ENCODE measurements at regions of chr7 and their contacts with region 1.

Region 1: DNA sequence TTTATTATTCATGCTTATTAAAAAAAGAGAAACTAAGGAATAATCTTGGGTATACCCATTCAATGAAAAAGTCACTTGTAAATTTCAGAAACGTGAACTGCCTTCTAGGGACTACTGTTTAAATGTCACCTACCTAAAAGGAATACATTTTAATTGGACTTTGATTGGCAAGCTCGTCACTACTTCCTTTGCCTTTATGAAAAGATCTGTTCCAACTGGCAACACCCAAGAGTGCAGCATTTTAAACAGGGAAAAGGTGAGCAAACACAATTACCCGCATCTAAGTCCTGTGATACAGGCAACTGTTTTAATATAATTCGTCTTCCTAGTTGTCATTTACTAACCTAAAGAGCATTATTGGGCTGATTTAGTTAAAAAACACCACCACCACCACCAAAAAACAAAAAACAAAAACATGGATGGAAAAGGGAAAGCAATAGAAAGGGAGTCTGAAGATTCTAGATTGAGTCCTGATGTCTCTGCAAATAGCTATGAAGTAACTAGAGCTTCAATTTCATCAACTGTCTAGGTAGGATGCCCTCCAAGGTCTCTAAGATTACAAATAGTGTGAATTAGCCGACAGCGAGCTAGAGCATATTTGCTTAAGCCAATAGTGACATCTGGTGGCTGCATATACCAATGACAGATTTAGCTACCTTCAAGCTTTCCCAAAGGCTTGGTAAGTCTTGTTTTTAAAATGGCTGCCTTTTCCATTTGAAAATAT is 33.8 kb upstream of the ICA1 start:
- DNase-seq: peak; percentile 40
- ATAC-seq: peak; percentile 83
- H3K4me3 Mint-ChIP-seq: no peak overlapping the region
- H3K27ac Mint-ChIP-seq: no peak overlapping the region
- H3K4me1 Mint-ChIP-seq: peaks cover 3% of the 10 kb centered on the region
- H3K27me3 Mint-ChIP-seq: peaks cover 11% of the 10 kb centered on the region
- CTCF ChIP-seq: peak; percentile 74

Region 2: DNA sequence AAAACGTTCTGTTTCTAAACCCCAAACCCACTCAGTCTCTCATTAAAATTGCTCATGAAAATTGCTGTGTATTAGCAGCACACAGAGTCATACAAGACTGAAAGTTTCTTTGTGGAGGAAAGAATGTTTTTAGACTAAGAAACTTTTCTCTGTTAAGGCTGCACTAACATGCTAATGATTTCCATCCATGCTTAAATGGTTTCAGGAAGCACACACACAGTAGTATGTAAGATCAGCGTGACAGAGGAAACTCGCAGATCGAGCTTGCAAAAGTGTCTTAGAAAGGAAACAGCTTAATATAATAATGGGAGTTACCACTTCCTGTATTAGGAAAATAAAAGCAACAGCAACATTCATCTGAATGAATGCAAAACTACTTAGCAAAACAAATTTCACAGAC is 146.6 kb before region 1 on chr7:
- CTCF ChIA-PET with region 1: no interaction called
- POLR2A ChIA-PET with region 1: no interaction called
- intact Hi-C with region 1: no loop called
- DNase-seq: no peak
- ATAC-seq: no peak
- H3K4me3 Mint-ChIP-seq: no peak overlapping the region
- H3K27ac Mint-ChIP-seq: peak overlapping the region; percentile 19
- H3K4me1 Mint-ChIP-seq: peaks cover 40% of the 10 kb centered on the region
- H3K27me3 Mint-ChIP-seq: no peaks in the 10 kb centered on the region
- CTCF ChIP-seq: no peak

Region 3: GRCh38 chr7:8205031-8205387 is 90.8 kb before region 1 on chr7:
- CTCF ChIA-PET with region 1: no interaction called
- POLR2A ChIA-PET with region 1: no interaction called
- intact Hi-C with region 1: no loop called
- DNase-seq: no peak
- ATAC-seq: no peak
- H3K4me3 Mint-ChIP-seq: no peak overlapping the region
- H3K27ac Mint-ChIP-seq: no peak overlapping the region
- H3K4me1 Mint-ChIP-seq: peaks cover 2% of the 10 kb centered on the region
- H3K27me3 Mint-ChIP-seq: peaks cover 4% of the 10 kb centered on the region
- CTCF ChIP-seq: no peak

Region 4: DNA sequence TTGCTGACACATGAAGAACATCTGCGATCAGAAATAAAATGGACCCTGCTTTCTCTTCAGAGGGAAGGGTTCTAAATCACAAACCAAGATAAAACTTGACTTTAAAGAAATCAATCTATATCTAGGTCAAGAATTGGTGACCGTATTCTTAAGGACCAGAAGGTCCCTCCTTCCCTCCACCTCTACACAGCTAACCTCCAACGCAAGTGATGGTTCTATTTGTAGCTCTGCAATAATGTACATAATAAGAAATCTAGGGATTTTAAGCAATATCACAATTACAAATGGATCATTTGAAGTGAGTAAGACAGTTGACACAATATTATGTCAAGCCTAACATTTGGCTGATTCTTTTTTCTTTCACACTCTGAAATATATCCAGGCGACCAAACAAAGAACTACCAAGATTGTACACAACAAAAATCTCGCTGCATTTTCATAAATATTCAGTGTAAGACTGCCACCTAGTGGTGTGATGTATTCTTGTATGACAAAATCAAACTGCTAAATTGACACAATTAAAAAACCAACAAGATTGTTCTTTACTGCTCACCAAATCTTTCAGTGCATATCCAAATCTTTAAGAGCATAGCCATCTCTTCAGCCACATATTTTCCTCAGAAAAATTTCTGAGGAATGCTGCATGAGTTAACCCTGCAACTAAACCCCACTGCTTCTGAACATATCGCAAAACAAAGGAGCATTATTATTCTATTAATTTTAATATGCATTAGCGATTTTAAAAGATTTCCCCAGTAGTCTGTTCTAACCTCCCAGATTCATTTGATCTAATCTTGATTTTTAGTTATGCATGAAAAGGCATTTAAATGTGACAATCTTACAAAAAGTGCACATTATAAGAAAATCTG is 78.4 kb before region 1 on chr7:
- CTCF ChIA-PET with region 1: interaction called, 9 read pairs
- POLR2A ChIA-PET with region 1: no interaction called
- intact Hi-C with region 1: loop called (anchors 5 kb)
- DNase-seq: peak; percentile 26
- ATAC-seq: peak; percentile 60
- H3K4me3 Mint-ChIP-seq: no peak overlapping the region
- H3K27ac Mint-ChIP-seq: no peak overlapping the region
- H3K4me1 Mint-ChIP-seq: peaks cover 2% of the 10 kb centered on the region
- H3K27me3 Mint-ChIP-seq: no peaks in the 10 kb centered on the region
- CTCF ChIP-seq: peak; percentile 86

Region 5: DNA sequence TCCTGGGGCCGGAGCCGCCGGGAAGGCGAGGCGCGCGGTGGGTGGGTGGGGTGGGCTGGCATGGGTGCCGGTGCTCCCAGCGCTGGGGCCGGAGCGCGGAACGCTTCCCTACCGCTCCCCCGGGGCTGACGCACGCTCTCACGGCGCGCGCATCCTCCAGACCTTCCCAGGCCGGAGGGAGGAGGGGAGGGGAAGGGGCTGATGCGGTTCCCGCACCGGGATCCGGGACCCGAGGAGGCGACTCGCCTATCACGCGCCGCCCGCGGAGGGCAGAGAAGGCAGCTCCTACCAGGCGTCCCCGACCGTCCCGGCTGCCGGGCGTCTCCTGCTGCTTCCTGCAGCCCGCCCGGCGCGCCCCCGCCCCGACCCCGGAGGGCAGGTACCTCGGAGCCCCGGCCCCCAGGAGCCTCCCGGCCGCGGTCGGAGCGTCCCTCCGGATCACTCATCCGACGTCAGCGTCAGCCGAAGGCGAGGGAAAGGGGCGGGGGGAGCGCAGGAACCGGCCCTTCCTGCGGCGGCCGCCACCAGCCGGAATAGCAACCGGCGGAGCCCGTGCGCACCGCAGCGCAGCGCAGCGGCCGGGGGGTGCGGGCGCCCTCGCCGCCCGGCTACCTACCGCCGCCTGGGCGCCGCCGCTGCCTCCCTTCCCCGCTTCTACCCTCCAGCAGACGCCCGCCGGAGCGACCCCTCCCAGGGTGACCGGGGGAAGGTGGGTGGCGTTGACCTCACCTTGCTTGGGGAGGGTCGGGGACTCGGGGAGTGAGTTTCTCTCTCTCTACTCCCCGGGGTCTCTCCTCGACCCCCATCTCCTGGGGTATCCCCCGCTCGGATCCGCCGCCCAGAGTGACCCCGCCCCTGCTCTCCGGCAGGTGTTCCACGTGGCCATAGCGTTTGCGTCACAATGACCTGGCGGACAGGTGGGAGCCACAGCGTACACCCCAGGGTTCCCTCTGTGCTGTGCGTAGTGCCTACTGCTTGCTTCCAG is 33.8 kb before region 1 on chr7 and contains the start of gene ICA1:
- CTCF ChIA-PET with region 1: interaction called, 10 read pairs
- POLR2A ChIA-PET with region 1: no interaction called
- intact Hi-C with region 1: no loop called
- DNase-seq: peak; percentile 33
- ATAC-seq: peak; percentile 73
- H3K4me3 Mint-ChIP-seq: peak within 1 kb of the TSS; percentile 67
- H3K27ac Mint-ChIP-seq: no peak within 1 kb of the TSS
- H3K4me1 Mint-ChIP-seq: peaks cover 6% of the 10 kb centered on the region
- H3K27me3 Mint-ChIP-seq: peaks cover 56% of the 10 kb centered on the region
- CTCF ChIP-seq: no peak
- total RNA-seq, gene ICA1: 0.34 to 1.3 TPM

Region 6: GRCh38 chr7:8277394-8277982 is 18.3 kb before region 1 on chr7:
- CTCF ChIA-PET with region 1: interaction called, 19 read pairs
- POLR2A ChIA-PET with region 1: no interaction called
- intact Hi-C with region 1: no loop called
- DNase-seq: no peak
- ATAC-seq: no peak
- H3K4me3 Mint-ChIP-seq: no peak overlapping the region
- H3K27ac Mint-ChIP-seq: no peak overlapping the region
- H3K4me1 Mint-ChIP-seq: no peaks in the 10 kb centered on the region
- H3K27me3 Mint-ChIP-seq: peaks cover 4% of the 10 kb centered on the region
- CTCF ChIP-seq: no peak

Region 7: DNA sequence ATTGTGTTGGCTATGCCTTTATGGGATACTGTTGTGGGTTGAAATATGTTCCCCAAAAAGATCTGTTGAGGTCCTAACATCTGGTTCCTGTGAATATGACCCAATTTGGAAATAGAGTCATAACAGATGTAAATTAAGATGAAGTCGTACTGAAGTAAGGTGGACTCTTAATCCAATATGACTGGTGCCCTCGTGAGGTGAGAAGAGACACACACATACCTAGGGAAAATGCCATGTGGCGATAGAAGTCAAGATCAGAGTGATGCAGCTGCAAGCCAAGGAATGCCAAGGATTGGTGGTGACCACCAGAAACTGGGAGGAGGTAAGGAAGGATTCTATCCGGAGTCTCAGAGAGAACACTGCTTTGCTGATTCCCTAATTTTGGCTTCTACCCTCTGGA is 311.9 kb after region 1 on chr7:
- CTCF ChIA-PET with region 1: no interaction called
- POLR2A ChIA-PET with region 1: no interaction called
- intact Hi-C with region 1: no loop called
- DNase-seq: no peak
- ATAC-seq: no peak
- H3K4me3 Mint-ChIP-seq: no peak overlapping the region
- H3K27ac Mint-ChIP-seq: no peak overlapping the region
- H3K4me1 Mint-ChIP-seq: no peaks in the 10 kb centered on the region
- H3K27me3 Mint-ChIP-seq: peaks cover 1% of the 10 kb centered on the region
- CTCF ChIP-seq: no peak

Region 8: GRCh38 chr7:8640671-8641070 is 344.9 kb after region 1 on chr7:
- CTCF ChIA-PET with region 1: no interaction called
- POLR2A ChIA-PET with region 1: no interaction called
- intact Hi-C with region 1: no loop called
- DNase-seq: no peak
- ATAC-seq: no peak
- H3K4me3 Mint-ChIP-seq: no peak overlapping the region
- H3K27ac Mint-ChIP-seq: no peak overlapping the region
- H3K4me1 Mint-ChIP-seq: no peaks in the 10 kb centered on the region
- H3K27me3 Mint-ChIP-seq: no peaks in the 10 kb centered on the region
- CTCF ChIP-seq: no peak